GM10248 (cell line): ENCODE measurements at regions of chr5 and their contacts with region 1.

Region 1: DNA sequence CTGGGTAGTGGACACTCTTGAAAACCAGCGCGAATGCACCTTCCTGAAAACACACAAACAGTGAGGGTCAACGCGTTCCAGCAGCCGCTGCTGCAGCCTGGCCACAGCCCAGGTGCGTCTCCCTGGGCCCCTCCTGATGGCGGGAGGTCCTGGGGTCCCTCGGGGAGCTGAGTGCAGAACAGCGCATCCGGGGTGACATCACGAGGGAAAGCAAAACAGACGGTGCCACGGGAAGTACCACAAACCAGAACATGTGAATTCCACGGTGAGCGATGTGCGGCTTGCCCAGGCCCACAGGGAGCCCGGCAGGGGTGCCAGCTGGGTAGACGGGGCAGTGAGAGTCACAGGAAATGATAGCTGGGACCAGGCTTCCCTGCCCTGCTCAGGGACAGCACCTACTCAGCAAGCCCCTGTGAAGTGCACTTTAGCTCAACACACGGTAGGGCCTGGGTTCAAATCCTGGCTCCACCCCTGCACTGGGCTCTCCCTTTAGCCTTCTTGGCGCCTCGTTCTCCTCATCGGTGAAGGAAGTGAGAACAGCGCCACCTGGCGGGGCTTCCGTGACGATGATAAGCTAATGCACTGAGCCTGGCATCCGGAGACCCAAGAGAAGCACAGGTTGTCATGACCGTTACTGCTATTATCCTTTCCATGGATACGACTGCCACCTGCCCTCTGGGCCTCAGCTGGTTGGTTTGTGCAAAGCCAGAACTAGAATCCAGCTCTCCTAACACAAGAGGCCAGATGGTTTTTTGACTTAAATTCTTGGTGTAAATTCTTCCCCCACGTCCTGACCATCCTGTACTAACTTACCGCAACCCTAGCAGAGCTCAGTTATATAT is 24.6 kb downstream of the GFPT2 start:
- DNase-seq: peak; percentile 87
- CTCF ChIP-seq: peak; percentile 92

Region 2: GRCh38 chr5:180126726-180127681 is 201.5 kb before region 1 on chr5:
- CTCF ChIA-PET with region 1: interaction called, 12 read pairs
- POLR2A ChIA-PET with region 1: no interaction called
- DNase-seq: peak; percentile 67
- CTCF ChIP-seq: peak; percentile 74

Region 3: DNA sequence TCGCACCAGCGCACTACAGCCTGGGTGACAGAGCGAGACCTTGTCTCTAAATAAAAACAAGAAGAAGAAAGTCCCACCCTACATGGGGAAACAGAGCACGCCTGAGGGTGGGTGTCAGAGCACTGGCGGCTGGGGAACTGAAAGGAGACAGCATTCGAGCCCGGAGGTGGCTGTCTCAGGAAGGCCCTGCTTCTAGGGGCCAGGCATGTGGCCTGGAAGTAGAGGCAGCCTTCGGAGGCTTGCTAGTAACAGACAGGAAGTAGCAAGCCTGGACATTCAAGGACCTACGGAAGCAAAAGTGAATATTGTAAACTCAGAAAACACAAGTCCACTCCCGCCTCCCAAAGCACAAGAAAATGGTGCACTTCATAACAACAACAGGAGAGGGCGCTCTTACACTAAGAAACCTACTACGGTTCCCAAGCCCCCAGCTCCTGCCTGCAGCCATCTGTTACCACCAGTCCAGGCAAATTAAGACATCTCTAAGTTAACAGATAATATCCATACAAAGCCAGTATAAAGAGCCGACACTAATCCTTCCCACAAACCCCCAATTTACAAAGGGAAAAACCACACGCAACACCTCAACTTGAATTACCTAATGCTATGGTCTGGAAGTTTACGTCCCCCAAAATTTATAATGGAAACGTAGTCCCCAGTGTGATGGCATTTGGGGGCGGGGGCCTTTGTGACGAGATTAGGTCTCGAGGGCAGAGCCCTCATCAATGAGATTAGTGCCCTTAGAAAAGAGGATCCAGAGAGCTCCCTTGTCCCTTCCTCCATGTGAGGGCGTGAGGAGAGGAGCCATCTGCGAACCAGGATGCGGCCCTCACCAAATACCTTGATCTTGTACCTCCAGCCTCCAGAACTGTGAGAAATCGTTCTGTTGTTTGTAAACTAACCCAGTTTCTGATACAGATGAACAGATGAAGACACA is 127.2 kb before region 1 on chr5:
- CTCF ChIA-PET with region 1: interaction called, 23 read pairs
- POLR2A ChIA-PET with region 1: no interaction called
- DNase-seq: no peak
- CTCF ChIP-seq: peak; percentile 15

Region 4: GRCh38 chr5:180291943-180292831 is 36.3 kb before region 1 on chr5 and contains the start of gene MAPK9:
- CTCF ChIA-PET with region 1: interaction called, 73 read pairs
- POLR2A ChIA-PET with region 1: no interaction called
- DNase-seq: peak; percentile 94
- CTCF ChIP-seq: no peak

Region 5: DNA sequence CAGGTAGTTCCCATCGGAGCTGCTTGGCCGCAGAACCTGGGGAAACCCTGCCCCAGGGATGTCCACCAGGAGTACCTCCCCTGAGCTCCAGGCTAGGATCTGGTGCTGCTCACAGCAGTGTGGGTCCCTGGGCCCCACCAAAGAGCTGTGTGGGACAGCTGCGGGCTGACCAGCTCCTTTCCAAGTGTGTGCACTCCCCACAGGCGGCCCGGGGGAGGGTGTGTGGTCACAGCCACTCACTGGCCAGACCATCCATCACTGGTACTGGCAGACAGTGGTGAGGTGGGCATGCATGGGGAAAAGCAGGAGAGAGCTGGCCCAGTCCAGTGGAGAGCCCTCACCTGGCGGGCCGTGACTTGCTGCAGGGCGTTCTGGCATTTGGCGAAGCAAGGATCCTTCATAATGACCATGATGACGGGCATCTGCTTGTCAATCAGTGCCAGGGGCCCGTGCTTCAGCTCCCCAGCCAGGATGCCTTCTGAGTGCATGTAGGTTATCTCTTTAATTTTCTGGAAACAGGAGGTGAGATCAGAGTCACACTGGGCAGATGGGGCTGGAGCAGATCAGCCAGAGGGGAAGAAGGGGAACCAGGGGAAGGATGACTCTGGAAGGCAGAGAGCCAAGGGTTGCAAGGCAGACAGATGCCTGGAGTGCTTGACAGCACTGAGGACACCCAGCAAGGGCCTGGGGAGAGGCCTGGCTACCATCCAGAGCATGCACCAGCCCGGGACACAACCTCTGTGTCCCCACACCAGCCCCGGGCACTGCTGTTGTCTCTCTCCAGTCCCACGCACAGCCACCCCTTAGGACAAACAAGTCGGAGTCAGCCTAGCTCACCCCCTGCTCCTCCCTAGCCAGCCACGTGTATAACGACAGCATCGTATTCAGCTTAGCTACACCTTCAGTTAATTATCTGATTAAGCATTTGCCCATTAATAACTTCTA is 23.8 kb before region 1 on chr5:
- CTCF ChIA-PET with region 1: interaction called, 50 read pairs
- POLR2A ChIA-PET with region 1: no interaction called
- DNase-seq: no peak
- CTCF ChIP-seq: no peak

Region 6: GRCh38 chr5:180315762-180316212 is 12.7 kb before region 1 on chr5:
- CTCF ChIA-PET with region 1: interaction called, 42 read pairs
- POLR2A ChIA-PET with region 1: no interaction called
- DNase-seq: peak; percentile 80
- CTCF ChIP-seq: peak; percentile 70

Region 7: DNA sequence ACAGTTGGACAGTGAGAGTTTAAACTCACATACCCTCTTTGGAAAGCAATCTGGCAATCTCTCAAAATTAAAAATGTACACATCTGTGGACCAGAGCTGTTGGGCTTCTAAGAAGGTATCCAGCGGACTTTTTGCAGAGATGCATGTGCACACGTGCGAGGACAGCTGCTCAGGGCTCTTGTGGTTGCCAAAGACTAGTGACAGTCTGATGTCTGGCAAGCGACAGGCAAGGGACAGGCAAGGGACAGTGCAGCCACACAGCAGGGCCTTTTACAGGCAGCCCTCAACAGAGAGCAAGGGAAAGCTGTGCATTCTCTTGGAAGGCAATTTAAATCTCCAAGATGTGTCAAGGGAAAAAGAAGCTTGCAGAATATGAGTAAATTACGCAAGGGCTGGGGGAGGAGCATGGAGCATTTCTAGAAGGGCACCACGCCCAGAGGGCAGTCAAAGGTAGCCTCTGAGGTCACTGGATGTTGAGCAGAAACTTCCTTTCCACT is 15.4 kb after region 1 on chr5:
- CTCF ChIA-PET with region 1: interaction called, 54 read pairs
- POLR2A ChIA-PET with region 1: interaction called, 3 read pairs
- DNase-seq: no peak
- CTCF ChIP-seq: no peak